ENCODE measurements at regions of chr12 and their contacts with region 1.

Region 1: DNA sequence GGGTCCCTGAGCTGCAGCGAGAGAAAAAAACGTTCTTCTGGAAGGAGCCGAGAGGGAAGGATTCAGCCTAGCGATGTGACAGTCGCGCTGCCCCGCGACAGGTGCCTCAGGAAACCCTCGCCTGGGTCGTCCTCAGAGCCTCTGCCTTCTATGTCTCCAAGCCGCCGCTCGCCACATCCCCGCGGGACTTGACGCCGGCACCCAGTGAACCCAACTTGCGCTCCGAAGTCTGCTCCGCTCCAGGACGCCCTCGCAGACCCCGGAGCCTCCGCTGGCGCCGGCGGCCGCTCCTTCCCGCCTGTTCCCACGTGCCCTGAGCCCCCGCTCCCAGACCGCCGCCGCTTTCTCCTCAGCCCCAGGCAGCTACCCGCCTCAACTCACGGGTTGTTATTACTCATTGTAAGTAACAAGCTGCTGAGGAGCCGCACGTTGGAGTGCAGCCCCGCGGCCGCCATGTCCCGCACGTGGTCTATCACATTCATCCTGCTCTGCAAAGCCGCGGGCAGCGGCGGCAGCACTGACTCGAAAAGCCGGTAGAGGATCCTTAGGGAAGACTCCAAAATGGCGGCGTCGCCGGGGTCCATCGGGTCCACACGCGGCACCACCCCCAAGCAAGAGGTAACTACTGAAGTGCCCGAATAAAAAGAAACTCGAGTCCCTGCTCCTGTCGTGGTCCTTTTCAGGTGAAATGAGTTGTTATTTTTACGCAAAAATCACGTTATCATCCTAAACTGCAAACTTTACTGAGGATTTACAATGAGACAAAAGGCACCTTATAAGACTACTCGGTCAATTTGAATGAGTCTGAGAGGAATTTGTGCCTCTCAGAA is at the start of gene ANAPC7:
- DNase-seq: peak; percentile 81
- H3K4me3 Mint-ChIP-seq: peak within 1 kb of the TSS; percentile 100
- H3K27ac Mint-ChIP-seq: peak within 1 kb of the TSS; percentile 97
- H3K4me1 Mint-ChIP-seq: peaks cover 25% of the 10 kb centered on the region
- H3K27me3 Mint-ChIP-seq: no peaks in the 10 kb centered on the region
- total RNA-seq, gene ANAPC7: 72.0 and 72.6 TPM in 2 replicates

Region 2: DNA sequence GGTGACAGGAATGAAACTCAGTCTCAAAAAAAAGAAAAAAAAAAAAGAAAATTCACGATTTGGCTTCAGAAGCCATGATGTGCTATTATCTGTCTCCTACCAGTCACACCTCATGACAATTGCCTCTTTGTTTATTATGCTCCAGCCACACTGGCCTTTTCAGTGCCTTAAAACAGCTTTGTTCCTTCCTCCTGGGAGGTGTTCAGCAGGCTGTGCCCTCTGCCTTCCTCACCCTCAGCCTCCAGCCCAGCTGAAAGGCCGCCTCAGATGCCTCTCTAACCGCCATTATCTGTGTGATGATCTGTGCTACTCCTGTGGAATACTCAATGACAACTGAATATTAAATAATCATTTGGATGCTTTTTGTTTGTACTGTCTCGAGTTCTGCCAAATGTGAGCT is 55.4 kb after region 1 on chr12:
- intact Hi-C with region 1: no loop called
- DNase-seq: no peak
- H3K4me3 Mint-ChIP-seq: no peak overlapping the region
- H3K27ac Mint-ChIP-seq: no peak overlapping the region
- H3K4me1 Mint-ChIP-seq: peaks cover 6% of the 10 kb centered on the region
- H3K27me3 Mint-ChIP-seq: no peaks in the 10 kb centered on the region

Region 3: DNA sequence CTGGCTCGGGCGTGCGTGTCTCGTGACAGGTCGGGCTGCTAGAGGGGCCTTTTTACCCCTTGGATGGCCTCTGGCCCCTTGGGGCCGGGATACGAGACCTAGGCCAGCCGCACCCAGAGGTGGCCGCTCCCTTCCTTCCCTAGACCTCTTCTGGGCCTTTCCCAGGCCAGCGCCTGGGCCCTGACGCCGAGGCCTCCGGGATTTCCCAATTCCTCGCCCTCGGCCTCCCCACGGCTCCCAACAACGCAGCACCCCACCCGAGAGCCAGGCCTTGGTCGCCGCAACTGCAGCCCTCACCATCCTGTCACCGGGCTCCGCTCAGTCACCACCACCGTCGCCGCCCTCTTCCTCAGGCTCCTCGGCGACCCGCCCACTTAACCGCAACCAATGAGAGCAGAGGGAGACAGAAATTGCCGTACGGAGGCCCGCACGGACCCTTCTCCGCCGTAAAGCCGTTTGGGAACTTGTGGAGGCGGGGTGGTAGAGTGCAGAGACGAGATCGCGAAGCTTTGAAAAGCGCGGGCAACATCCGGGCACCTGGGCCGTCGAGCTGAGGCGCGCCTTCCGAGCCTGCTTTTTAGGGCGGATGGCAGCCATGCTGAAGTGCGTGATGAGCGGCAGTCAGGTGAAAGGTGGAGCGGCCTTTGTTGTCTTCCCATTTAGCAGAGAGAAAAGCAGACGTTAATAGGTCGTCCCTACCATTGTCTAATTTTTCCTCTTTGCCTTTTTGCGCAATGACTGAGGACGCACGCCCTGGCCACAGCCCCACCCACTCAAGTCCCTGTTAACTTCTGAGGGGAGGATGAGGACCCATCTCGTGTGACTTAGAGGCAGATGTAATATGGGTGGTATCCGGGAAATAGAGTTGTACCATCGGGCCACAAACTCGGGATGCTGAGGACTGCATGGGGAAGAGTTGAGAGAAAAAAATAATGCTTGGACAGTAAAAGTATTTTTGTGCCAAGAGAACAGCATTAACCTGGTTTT is 98.7 kb after region 1 on chr12 and contains the starts of genes RAD9B and VPS29:
- intact Hi-C with region 1: loop called (anchors 1 kb)
- DNase-seq: peak; percentile 99
- H3K4me3 Mint-ChIP-seq: peak within 1 kb of the TSS; percentile 90
- H3K27ac Mint-ChIP-seq: peak within 1 kb of the TSS; percentile 90
- H3K4me1 Mint-ChIP-seq: peaks cover 29% of the 10 kb centered on the region
- H3K27me3 Mint-ChIP-seq: no peaks in the 10 kb centered on the region
- total RNA-seq, gene RAD9B: 0.88 and 1.4 TPM in 2 replicates
- total RNA-seq, gene VPS29: 109 and 111 TPM in 2 replicates

Measured in activated T-helper 1 cell treated with anti-CD3 and anti-CD28 coated beads, Interleukin-12 subunit alpha, Interleukin-12 subunit beta, Interleukin-2, Interleukin-4 antibody, amounts not matched to agents 30 ng/mL and 10 ng/mL and 1 ng/mL, durations not matched to agents 14 hours and 24 hours and 36 hours (primary cell).